Lower leg skin (tissue), 4 donors: ENCODE measurements at regions of chr18 and their contacts with region 1.

Region 1: GRCh38 chr18:57281519-57281918 is 70.8 kb upstream of the ST8SIA3 start:
- DNase-seq: no peak
- H3K4me3 ChIP-seq: no peak overlapping the region
- CTCF ChIP-seq: no peak
- POLR2A ChIP-seq: no peak

Region 2: GRCh38 chr18:55869556-55870501 is 1411.7 kb before region 1 on chr18:
- intact Hi-C with region 1: loop called (anchors 5 kb)
- DNase-seq: peak; percentile 46 to 87
- H3K4me3 ChIP-seq: no peak overlapping the region
- CTCF ChIP-seq: no peak
- POLR2A ChIP-seq: no peak

Region 3: GRCh38 chr18:56962322-56962721 is 319.2 kb before region 1 on chr18:
- intact Hi-C with region 1: no loop called
- DNase-seq: no peak
- H3K4me3 ChIP-seq: no peak overlapping the region
- CTCF ChIP-seq: no peak
- POLR2A ChIP-seq: no peak

Region 4: GRCh38 chr18:57230861-57231585 is 50.5 kb before region 1 on chr18:
- intact Hi-C with region 1: no loop called
- DNase-seq: no peak
- H3K4me3 ChIP-seq: no peak overlapping the region
- CTCF ChIP-seq: no peak
- POLR2A ChIP-seq: no peak

Region 5: DNA sequence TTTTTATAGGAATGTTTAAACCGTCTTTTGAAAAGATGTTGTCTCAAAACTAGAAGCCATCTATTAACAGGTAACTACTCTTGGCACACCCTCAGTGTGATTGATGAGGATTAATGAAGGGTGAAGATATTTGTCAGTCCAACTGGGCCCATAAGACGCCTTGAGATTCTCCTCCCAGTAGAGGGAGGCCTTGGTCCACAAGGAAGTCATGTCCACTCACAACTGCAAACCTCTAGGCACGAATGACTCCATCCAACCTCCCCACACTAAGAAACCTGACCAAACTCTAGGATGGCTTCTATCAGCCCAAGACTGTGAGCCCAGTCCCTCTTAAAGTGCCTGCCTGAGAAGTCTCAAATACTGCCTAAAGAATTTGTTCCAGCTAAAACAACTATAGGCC is 1919.3 kb after region 1 on chr18:
- intact Hi-C with region 1: no loop called
- DNase-seq: peak in 1 of 2 donors; percentile 10
- H3K4me3 ChIP-seq: no peak overlapping the region
- CTCF ChIP-seq: no peak
- POLR2A ChIP-seq: no peak